ENCODE measurements at regions of chr15 and their contacts with region 1.

Region 1: GRCh38 chr15:64845183-64845611 is 3.5 kb downstream of the PLEKHO2 start:
- DNase-seq: peak in 2 of 7 donors; percentile 39 to 59
- H3K4me3 ChIP-seq: peak overlapping the region in 1 of 4 donors; percentile 92
- H3K27ac ChIP-seq: peak overlapping the region; percentile 3 to 97 (median 45)
- H3K4me1 ChIP-seq: peaks cover 39 to 58% of the 10 kb centered on the region in 2 donors
- H3K27me3 ChIP-seq: no peaks in the 10 kb centered on the region
- CTCF ChIP-seq: no peak
- POLR2A ChIP-seq: no peak

Region 2: GRCh38 chr15:64895285-64896065 is 50.3 kb after region 1 on chr15:
- intact Hi-C with region 1: loop called in 1 of 2 experiments (anchors 5 kb)
- DNase-seq: peak in 5 of 7 donors; percentile 53 to 77 (median 62)
- H3K4me3 ChIP-seq: peak overlapping the region in 1 of 4 donors; percentile 41
- H3K27ac ChIP-seq: peak overlapping the region; percentile 62 to 92 (median 90)
- H3K4me1 ChIP-seq: peaks cover 46 to 67% of the 10 kb centered on the region in 2 donors
- H3K27me3 ChIP-seq: no peaks in the 10 kb centered on the region
- CTCF ChIP-seq: peak in 2 of 6 experiments; percentile 9 to 11
- POLR2A ChIP-seq: peak in 1 of 2 donors; percentile 20

Region 3: DNA sequence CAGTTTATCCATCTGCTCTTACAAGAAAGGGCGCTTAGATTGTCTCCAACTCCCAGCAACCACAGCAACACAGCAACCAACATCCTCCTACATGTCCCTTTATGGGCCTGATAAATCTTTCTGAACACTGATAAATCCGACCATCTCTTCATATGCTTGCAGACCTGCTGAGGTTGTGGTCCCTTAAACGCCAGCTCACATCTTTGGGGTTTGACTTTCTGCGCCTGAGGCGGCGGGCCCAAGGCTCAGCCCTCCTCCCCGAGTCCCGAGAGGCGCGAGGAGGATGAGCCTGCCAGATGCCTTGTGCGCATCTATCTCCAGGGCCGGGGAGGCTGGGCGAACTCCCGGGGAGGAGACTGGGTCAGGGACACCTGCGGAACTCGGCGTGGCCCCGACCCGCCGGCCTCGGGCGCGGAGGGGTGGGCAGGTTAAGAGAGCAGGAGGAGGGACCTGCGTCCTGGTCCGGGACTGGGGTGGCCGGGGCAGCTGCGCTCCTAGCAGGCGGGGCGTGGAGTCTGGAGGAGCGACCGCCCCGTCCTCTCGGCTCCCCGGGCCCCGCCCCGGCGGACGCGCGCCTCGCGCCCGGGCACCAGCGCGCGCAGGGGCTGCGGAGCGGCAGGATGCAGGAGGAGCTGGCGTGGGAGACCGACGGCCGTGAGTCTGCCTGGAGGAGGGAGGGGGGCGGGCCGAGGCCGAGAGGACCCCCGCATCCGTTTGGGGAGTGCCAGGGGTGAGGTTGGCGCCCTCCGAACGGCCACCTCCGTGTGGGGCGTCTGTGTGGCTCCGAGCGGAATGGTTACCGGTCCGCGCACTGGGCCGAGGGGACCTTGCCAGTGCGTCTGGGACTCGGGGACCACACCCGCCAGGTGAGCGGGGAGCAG is 66.4 kb after region 1 on chr15 and contains the start of gene ANKDD1A:
- intact Hi-C with region 1: loop called in 1 of 2 experiments (anchors 5 kb)
- DNase-seq: peak; percentile 78 to 89 (median 87)
- H3K4me3 ChIP-seq: peak within 1 kb of the TSS in 3 of 4 donors; percentile 23 to 83 (median 34)
- H3K27ac ChIP-seq: peak within 1 kb of the TSS in 3 of 5 donors; percentile 45 to 86 (median 74)
- H3K4me1 ChIP-seq: peaks cover 0 to 30% of the 10 kb centered on the region in 2 donors
- H3K27me3 ChIP-seq: no peaks in the 10 kb centered on the region
- CTCF ChIP-seq: no peak
- POLR2A ChIP-seq: peak; percentile 25 to 64
- total RNA-seq, gene ANKDD1A: 7.0 to 41.7 (median 31.2) TPM

Region 4: DNA sequence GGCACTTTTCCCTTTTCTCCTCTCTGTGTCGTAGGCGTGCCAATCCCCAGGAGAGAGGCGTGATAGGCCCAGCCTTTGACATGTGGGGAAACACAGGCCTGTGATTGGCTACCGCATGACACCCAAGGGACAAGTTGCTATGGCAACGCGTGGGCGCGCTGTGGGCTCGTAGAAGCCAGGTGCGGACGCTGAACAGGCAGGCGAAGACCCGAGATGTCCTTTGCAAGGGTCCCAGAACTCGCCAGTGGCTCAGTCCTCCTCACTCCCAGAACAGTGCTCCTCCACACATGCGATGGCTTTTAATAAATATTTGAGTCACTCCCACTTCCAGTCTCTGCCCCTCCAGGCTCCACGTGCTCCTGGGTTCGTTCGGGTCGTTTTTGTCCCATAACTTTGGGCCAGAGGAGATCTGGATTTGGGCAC is 204.2 kb after region 1 on chr15:
- intact Hi-C with region 1: no loop called
- DNase-seq: peak; percentile 87 to 98 (median 94)
- H3K4me3 ChIP-seq: peak overlapping the region in 1 of 4 donors; percentile 34
- H3K27ac ChIP-seq: no peak overlapping the region
- H3K4me1 ChIP-seq: peaks cover 0 to 17% of the 10 kb centered on the region in 2 donors
- H3K27me3 ChIP-seq: no peaks in the 10 kb centered on the region
- CTCF ChIP-seq: no peak
- POLR2A ChIP-seq: no peak

Region 5: DNA sequence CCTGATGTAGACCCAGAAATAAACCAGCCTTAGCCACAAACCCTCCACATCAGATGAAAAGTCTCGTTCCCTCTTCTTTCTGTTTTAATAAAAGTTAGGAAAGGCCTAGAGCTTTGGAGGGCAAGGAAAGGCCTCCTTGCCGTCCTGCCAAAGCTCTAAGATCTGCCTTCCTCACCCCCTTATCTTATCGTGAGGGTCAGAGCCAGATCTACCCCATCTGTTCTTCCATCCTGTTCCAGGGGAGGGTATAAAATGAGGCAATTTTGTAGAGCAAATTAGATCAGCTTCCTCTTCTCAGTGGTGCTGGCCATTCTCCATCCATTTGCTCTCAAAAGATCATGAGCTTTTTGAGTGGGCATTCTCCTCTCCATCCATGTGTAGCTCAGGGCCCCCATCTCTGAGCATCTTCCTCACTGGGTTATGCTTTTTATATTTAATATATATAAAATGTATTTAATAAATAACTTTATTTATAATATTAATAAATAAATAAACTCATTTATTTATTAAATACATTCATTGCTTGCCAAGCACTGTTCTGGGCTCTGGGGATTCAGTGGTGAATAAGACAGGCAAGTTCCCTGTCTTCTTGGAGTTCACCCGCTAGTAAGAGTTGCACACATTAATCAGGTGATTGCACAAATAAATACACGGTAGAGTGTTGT is 774.6 kb after region 1 on chr15:
- intact Hi-C with region 1: no loop called
- DNase-seq: no peak
- H3K4me3 ChIP-seq: no peak overlapping the region
- H3K27ac ChIP-seq: no peak overlapping the region
- H3K4me1 ChIP-seq: no peaks in the 10 kb centered on the region
- H3K27me3 ChIP-seq: no peaks in the 10 kb centered on the region
- CTCF ChIP-seq: no peak
- POLR2A ChIP-seq: no peak